ENCODE measurements at regions of chr18 and their contacts with region 1.

Region 1: GRCh38 chr18:11937874-11938478 is 29.9 kb upstream of the MPPE1 start:
- DNase-seq: peak in 1 of 2 experiments; percentile 84
- H3K4me3 ChIP-seq: no peak overlapping the region
- H3K27ac ChIP-seq: no peak overlapping the region
- H3K4me1 ChIP-seq: no peaks in the 10 kb centered on the region
- H3K27me3 ChIP-seq: no peaks in the 10 kb centered on the region
- CTCF ChIP-seq: peak; percentile 57 to 83 (median 73)
- EP300 ChIP-seq: no peak
- POLR2A ChIP-seq: no peak
- RAD21 ChIP-seq: peak; percentile 87 to 89

Region 2: DNA sequence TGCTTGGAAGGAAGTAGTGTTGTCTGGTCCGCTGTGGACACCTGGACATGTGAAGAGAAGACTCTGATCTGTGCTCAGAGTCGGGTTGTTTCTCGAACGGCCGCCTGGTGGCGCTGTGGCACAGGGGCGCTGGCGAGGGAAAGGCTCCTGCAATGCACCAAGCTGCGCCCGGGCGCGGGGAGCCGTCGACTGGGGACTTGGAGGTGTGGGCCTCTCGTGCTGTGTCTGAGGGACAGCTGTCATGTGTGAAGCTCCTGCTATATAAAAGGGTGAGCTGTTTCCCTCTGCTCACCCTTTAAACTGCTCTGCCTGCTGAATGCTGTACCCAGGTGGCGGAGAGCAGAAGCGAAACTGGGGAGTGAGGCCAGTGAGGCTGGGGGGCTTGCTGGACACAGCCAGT is 204.9 kb before region 1 on chr18:
- CTCF ChIA-PET with region 1: interaction called, 25 read pairs
- POLR2A ChIA-PET with region 1: no interaction called
- DNase-seq: peak; percentile 54 to 97
- H3K4me3 ChIP-seq: no peak overlapping the region
- H3K27ac ChIP-seq: no peak overlapping the region
- H3K4me1 ChIP-seq: peaks cover 0 to 2% (median 0%) of the 10 kb centered on the region in 4 experiments; a peak in 2 of 7 replicates
- H3K27me3 ChIP-seq: peaks cover 0 to 3% (median 0%) of the 10 kb centered on the region in 4 experiments; a peak in 1 of 7 replicates
- CTCF ChIP-seq: peak; percentile 82 to 96 (median 92)
- EP300 ChIP-seq: no peak
- POLR2A ChIP-seq: no peak
- RAD21 ChIP-seq: peak; percentile 94 to 96

Region 3: GRCh38 chr18:11925800-11926481 is 12.0 kb before region 1 on chr18:
- CTCF ChIA-PET with region 1: interaction called, 99 read pairs
- POLR2A ChIA-PET with region 1: interaction called, 3 read pairs
- DNase-seq: no peak
- H3K4me3 ChIP-seq: no peak overlapping the region
- H3K27ac ChIP-seq: no peak overlapping the region
- H3K4me1 ChIP-seq: no peaks in the 10 kb centered on the region; a peak in 1 of 7 replicates
- H3K27me3 ChIP-seq: no peaks in the 10 kb centered on the region
- CTCF ChIP-seq: no peak
- EP300 ChIP-seq: no peak
- POLR2A ChIP-seq: no peak
- RAD21 ChIP-seq: no peak

Region 4: DNA sequence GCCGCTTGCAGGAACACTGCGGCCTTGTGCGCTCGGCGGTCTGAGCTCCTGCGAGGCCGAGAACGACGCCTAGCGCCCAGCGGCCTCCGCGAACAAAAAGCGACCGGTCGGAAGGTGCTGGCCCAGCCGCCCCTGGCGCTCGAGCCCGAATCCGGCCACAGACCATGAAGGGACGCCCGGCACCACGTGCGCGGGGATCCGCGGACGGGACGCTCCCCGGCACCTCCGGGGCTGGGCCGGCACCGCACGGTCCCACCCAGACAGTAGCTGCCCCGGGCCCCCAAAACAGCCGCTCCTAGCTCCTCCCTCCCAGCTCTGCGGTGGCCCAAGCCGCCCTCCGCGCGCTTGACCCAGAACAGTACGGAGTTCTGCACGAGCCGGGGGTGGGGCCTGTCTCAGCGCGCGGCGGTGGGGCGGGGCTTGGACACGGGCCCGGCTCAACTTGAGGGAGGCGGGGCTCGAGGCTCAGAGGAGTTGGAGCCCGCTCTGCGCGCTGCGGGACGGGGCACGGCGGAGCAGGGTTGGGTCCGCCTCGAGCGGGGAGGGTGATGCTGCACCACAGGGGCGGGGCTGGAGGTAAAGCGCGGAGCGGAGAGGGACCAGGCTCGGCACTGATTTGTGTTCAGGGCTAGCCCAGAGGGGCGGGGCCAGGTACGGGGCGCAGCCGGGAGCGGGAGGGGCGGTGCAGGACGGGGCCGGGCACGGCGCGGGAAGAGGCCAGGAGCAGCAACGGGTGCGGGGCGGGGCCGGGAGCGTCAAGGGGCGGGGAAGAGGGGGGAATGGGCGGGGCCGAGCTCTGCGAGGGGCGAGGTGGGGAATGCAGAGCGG is 42.8 kb after region 1 on chr18:
- CTCF ChIA-PET with region 1: interaction called, 42 read pairs
- POLR2A ChIA-PET with region 1: interaction called, 5 read pairs
- DNase-seq: peak; percentile 98 to 99
- H3K4me3 ChIP-seq: peak overlapping the region; percentile 40 to 83 (median 63)
- H3K27ac ChIP-seq: peak overlapping the region; percentile 94
- H3K4me1 ChIP-seq: peaks cover 7 to 15% (median 9%) of the 10 kb centered on the region in 4 experiments
- H3K27me3 ChIP-seq: no peaks in the 10 kb centered on the region
- CTCF ChIP-seq: peak in 1 of 3 experiments; percentile 13; a peak in 1 of 4 replicates
- EP300 ChIP-seq: no peak
- POLR2A ChIP-seq: peak; percentile 79 to 86
- RAD21 ChIP-seq: peak; percentile 12; a peak in 2 of 4 replicates

Region 5: DNA sequence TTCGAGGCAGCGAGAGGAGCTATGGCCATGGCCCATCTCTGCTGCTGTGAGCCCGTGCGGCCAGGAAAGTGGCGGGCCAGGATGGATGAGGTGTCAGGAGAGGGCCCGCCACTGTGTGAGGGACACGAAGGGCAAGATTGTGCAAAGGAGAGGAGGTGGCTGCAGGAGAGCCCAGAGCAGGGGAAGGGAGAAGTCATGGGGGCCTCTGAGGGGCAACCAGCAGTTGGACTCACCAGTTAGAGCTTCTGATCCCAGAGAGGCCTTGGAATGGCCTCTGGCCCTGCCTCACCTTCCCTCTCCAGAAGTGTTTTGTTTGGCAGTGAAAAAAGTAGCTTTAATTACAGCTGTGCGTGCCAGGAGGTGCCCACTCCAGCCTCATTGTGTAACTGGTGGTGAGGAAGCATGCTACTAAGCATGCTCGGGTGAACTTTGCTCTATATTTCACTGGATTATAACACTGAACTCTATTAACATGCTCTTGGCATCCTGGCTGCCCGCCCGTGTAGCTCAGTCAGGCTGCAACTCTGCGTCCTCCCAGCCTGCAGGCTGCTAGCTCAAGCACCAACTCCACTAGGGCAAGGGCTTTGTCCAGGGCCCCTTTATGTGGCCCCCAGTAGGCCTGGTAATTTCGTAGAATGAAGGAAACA is 77.6 kb after region 1 on chr18:
- CTCF ChIA-PET with region 1: interaction called, 12 read pairs
- POLR2A ChIA-PET with region 1: no interaction called
- DNase-seq: no peak
- H3K4me3 ChIP-seq: no peak overlapping the region
- H3K27ac ChIP-seq: no peak overlapping the region
- H3K4me1 ChIP-seq: no peaks in the 10 kb centered on the region
- H3K27me3 ChIP-seq: no peaks in the 10 kb centered on the region
- CTCF ChIP-seq: no peak
- EP300 ChIP-seq: no peak
- POLR2A ChIP-seq: no peak
- RAD21 ChIP-seq: no peak

Region 6: DNA sequence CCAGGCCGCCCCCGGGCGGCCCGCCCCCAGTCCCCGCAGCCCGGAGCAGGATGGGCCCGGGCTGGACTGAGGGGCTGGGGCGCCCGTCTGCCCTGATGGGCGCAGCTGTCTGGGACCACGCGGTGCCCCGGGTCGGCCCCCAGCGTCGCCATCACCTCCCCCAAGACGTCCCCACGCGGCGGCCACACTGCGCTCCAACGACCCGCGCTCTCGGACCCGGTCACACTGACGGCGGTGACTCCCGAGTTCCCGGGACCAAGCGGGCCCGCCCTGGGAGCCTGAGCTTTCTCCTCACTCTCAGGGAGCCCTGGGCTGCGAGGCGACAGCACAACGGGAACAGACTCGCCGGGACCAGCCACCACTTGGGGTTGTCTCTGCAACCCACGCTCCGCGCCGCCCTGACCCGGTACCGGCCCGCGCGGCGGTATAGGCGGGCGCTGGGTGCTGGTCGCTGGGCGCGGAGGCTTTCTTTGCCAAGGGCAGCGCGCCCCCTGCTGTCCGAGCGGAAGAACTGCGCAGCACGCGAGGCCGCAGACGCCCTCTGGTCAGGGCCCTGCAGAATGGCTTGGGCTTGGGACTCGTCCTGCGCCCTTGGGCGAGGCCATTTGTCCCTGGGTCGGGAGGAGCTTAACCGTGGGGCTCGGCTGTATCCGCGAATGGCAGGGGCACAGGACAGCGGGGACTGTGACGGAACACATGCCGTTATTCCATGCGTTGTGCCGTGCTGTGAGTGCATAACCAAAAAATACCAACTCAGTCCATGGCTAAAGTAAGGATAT is 100.9 kb after region 1 on chr18:
- CTCF ChIA-PET with region 1: interaction called, 34 read pairs
- POLR2A ChIA-PET with region 1: no interaction called
- DNase-seq: peak; percentile 50 to 94
- H3K4me3 ChIP-seq: peak overlapping the region; percentile 33 to 72 (median 65)
- H3K27ac ChIP-seq: no peak overlapping the region
- H3K4me1 ChIP-seq: no peaks in the 10 kb centered on the region
- H3K27me3 ChIP-seq: peaks cover 0 to 13% (median 10%) of the 10 kb centered on the region in 4 experiments; a peak in 6 of 7 replicates
- CTCF ChIP-seq: peak; percentile 95 to 98 (median 95)
- EP300 ChIP-seq: no peak
- POLR2A ChIP-seq: no peak
- RAD21 ChIP-seq: peak; percentile 93 to 96

Measured in H1 (cell line).